GM12878 (cell line): ENCODE measurements at regions of chr6 and their contacts with region 1.

Region 1: GRCh38 chr6:6407071-6407741 is 86.7 kb upstream of the F13A1 start:
- DNase-seq: peak; percentile 97
- ATAC-seq: peak; percentile 95
- H3K4me3 ChIP-seq: peak overlapping the region; percentile 23; the same call in 1 of the 2 replicates
- H3K27ac ChIP-seq: peak overlapping the region; percentile 54
- H3K4me1 ChIP-seq: peaks cover 22% of the 10 kb centered on the region
- H3K27me3 ChIP-seq: no peaks in the 10 kb centered on the region
- CTCF ChIP-seq: no peak
- EP300 ChIP-seq: peak; percentile 76 to 83; a peak in 3 of 4 replicates
- POLR2A ChIP-seq: peak; percentile 47; the same call in 1 of the 2 replicates
- RAD21 ChIP-seq: 0 out of 2 replicates have a peak, but pooled peaks have one; percentile 8

Region 2: DNA sequence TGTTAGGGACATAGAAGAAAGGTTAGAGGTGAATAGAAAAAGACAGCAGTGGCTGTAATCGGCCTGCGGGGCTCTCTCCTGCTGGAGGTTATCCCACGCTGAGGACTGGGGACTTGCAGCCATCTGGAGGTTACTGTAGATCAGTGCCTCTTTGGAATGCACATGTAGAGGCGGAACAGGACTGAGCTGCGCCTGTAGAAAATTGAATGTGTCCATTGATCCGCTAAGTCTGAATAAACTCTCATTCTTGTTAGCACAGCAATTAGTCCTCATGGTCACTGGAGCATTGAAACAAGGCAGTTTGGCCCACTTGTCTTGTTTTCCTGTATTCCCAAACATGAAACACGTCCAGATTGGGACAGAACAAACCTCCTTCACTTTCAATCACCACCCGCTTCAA is 40.4 kb before region 1 on chr6:
- CTCF ChIA-PET with region 1: no interaction called
- POLR2A ChIA-PET with region 1: no interaction called
- RAD21 ChIA-PET with region 1: no interaction called
- SMC1A ChIA-PET with region 1: no interaction called
- in situ Hi-C with region 1: no loop called
- intact Hi-C with region 1: no loop called
- DNase-seq: no peak
- ATAC-seq: no peak
- H3K4me3 ChIP-seq: no peak overlapping the region
- H3K27ac ChIP-seq: no peak overlapping the region
- H3K4me1 ChIP-seq: no peaks in the 10 kb centered on the region
- H3K27me3 ChIP-seq: no peaks in the 10 kb centered on the region
- CTCF ChIP-seq: no peak
- EP300 ChIP-seq: no peak
- POLR2A ChIP-seq: no peak
- RAD21 ChIP-seq: no peak

Region 3: DNA sequence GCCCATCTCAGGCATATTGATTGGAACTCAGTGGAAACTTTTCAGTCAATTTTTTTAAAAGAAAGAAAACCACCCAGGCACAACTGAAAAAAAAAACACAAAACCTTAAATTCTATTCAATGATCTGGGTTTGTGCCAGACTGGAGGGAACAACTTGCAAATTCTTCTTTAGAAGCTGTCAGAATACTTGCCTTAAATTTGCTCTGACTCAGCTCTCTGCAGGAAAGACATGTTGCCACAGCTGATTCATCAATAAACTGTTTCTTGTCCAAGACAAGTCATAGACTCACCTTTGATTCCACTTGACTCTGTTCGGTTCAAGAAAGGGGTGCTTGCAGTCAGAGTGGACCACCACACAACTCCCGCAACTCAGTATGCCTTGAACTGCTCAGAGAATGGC is 31.1 kb after region 1 on chr6:
- CTCF ChIA-PET with region 1: interaction called, 3 read pairs
- POLR2A ChIA-PET with region 1: interaction called, 3 read pairs
- RAD21 ChIA-PET with region 1: interaction called, 5 read pairs
- SMC1A ChIA-PET with region 1: interaction called, 21 read pairs
- in situ Hi-C with region 1: no loop called
- intact Hi-C with region 1: no loop called
- DNase-seq: no peak
- ATAC-seq: no peak
- H3K4me3 ChIP-seq: no peak overlapping the region
- H3K27ac ChIP-seq: no peak overlapping the region
- H3K4me1 ChIP-seq: peaks cover 4% of the 10 kb centered on the region; the same call in 1 of the 2 replicates
- H3K27me3 ChIP-seq: no peaks in the 10 kb centered on the region
- CTCF ChIP-seq: no peak
- EP300 ChIP-seq: no peak
- POLR2A ChIP-seq: no peak
- RAD21 ChIP-seq: no peak

Region 4: DNA sequence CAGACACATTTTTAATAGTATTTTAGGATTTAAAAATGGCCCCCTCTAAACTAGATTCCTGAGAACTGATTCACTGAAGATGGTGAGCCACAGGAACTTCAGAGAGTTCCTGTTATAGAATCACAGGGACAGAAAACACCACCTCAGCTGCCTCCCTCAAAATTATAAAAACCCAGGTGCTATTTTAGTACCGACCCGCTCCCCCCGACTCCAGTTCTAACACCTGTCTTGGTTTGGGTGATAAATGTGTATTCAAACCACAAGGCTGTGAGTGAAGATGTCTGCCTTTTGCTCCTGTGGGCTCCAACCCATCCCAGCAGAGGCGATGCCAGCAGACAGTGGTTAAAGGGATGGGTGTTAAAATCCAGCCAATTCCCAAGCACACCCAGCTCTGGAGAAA is 53.9 kb after region 1 on chr6:
- CTCF ChIA-PET with region 1: interaction called, 5 read pairs
- POLR2A ChIA-PET with region 1: interaction called, 5 read pairs
- RAD21 ChIA-PET with region 1: interaction called, 6 read pairs
- SMC1A ChIA-PET with region 1: interaction called, 38 read pairs
- in situ Hi-C with region 1: no loop called
- intact Hi-C with region 1: no loop called
- DNase-seq: no peak
- ATAC-seq: peak; percentile 82
- H3K4me3 ChIP-seq: no peak overlapping the region
- H3K27ac ChIP-seq: no peak overlapping the region; the same call in 1 of the 2 replicates
- H3K4me1 ChIP-seq: peaks cover 6% of the 10 kb centered on the region; the same call in 1 of the 2 replicates
- H3K27me3 ChIP-seq: no peaks in the 10 kb centered on the region
- CTCF ChIP-seq: no peak
- EP300 ChIP-seq: peak in 1 of 2 experiments; percentile 67; a peak in 2 of 4 replicates
- POLR2A ChIP-seq: no peak
- RAD21 ChIP-seq: no peak